Activated T-helper 2 cell treated with anti-CD3 and anti-CD28 coated beads, Interferon-gamma antibody, Interleukin-2, Interleukin-4, amounts not matched to agents 10 μg/mL and 5 μg/mL and 100 μg/mL, durations not matched to agents 14 hours and 24 hours and 36 hours (primary cell): ENCODE measurements at regions of chr15 and their contacts with region 1.

Region 1: GRCh38 chr15:63473999-63474809 is 30.2 kb upstream of the USP3 start:
- DNase-seq: no peak
- H3K4me3 Mint-ChIP-seq: no peak overlapping the region
- H3K27ac Mint-ChIP-seq: peak overlapping the region; percentile 88
- H3K4me1 Mint-ChIP-seq: peaks cover 38% of the 10 kb centered on the region
- H3K27me3 Mint-ChIP-seq: no peaks in the 10 kb centered on the region

Region 2: GRCh38 chr15:62324382-62324781 is 1149.8 kb before region 1 on chr15:
- intact Hi-C with region 1: no loop called
- DNase-seq: no peak
- H3K4me3 Mint-ChIP-seq: no peak overlapping the region
- H3K27ac Mint-ChIP-seq: no peak overlapping the region
- H3K4me1 Mint-ChIP-seq: no peaks in the 10 kb centered on the region
- H3K27me3 Mint-ChIP-seq: peaks cover 7% of the 10 kb centered on the region

Region 3: GRCh38 chr15:62665449-62665848 is 808.8 kb before region 1 on chr15:
- intact Hi-C with region 1: no loop called
- DNase-seq: no peak
- H3K4me3 Mint-ChIP-seq: no peak overlapping the region
- H3K27ac Mint-ChIP-seq: no peak overlapping the region
- H3K4me1 Mint-ChIP-seq: no peaks in the 10 kb centered on the region
- H3K27me3 Mint-ChIP-seq: peaks cover 8% of the 10 kb centered on the region

Region 4: GRCh38 chr15:62995047-62995674 is 479.0 kb before region 1 on chr15:
- intact Hi-C with region 1: no loop called
- DNase-seq: no peak
- H3K4me3 Mint-ChIP-seq: no peak overlapping the region
- H3K27ac Mint-ChIP-seq: no peak overlapping the region
- H3K4me1 Mint-ChIP-seq: no peaks in the 10 kb centered on the region
- H3K27me3 Mint-ChIP-seq: peaks cover 6% of the 10 kb centered on the region

Region 5: GRCh38 chr15:63668601-63669000 is 194.4 kb after region 1 on chr15:
- intact Hi-C with region 1: loop called (anchors 5 kb)
- DNase-seq: no peak
- H3K4me3 Mint-ChIP-seq: peak overlapping the region; percentile 58
- H3K27ac Mint-ChIP-seq: peak overlapping the region; percentile 66
- H3K4me1 Mint-ChIP-seq: peaks cover 54% of the 10 kb centered on the region
- H3K27me3 Mint-ChIP-seq: no peaks in the 10 kb centered on the region